MCF 10A (cell line): ENCODE measurements at regions of chr5 and their contacts with region 1.

Region 1: GRCh38 chr5:175867587-175868347 is 3.6 kb upstream of the CPLX2 start:
- DNase-seq: peak; percentile 66
- H3K4me3 Mint-ChIP-seq: no peak overlapping the region
- H3K27ac Mint-ChIP-seq: no peak overlapping the region
- H3K4me1 Mint-ChIP-seq: no peaks in the 10 kb centered on the region
- H3K27me3 Mint-ChIP-seq: peaks cover 66% of the 10 kb centered on the region
- CTCF ChIP-seq: peak; percentile 48

Region 2: GRCh38 chr5:175746851-175747250 is 120.9 kb before region 1 on chr5:
- CTCF ChIA-PET with region 1: interaction called, 4 read pairs
- POLR2A ChIA-PET with region 1: no interaction called
- intact Hi-C with region 1: loop called (anchors 5 kb)
- DNase-seq: peak; percentile 63
- H3K4me3 Mint-ChIP-seq: peak overlapping the region; percentile 51
- H3K27ac Mint-ChIP-seq: no peak overlapping the region
- H3K4me1 Mint-ChIP-seq: peaks cover 14% of the 10 kb centered on the region
- H3K27me3 Mint-ChIP-seq: peaks cover 26% of the 10 kb centered on the region
- CTCF ChIP-seq: no peak

Region 3: DNA sequence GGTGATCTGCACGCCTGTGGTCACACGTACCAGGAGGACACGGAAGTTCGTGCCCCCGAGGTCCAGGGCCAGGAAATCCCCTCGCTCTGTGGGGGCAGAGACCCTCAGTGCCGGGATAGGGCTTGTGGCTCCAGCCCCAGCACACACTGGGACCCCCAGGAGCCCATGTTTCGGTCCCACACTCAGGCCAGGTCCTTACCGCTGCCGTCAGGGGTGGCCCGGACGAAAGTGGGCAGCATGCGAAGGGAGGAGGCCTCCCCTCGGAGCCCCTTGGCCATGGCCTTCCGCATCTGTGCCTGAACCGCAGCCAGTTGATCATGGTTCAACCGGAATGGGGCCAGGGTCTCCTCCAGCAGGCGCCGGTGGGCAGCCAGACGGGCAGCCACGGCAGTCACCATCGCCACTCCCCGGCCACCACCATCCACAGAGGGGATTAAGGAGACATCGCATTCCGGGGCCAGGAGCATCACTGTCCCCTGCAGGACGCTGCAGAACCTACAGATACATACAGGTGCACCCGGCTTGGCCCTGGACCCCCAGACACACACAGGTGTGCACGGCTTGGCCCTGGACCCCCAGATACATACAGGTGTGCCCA is 1019.6 kb after region 1 on chr5:
- CTCF ChIA-PET with region 1: no interaction called
- POLR2A ChIA-PET with region 1: no interaction called
- intact Hi-C with region 1: no loop called
- DNase-seq: no peak
- H3K4me3 Mint-ChIP-seq: no peak overlapping the region
- H3K27ac Mint-ChIP-seq: no peak overlapping the region
- H3K4me1 Mint-ChIP-seq: no peaks in the 10 kb centered on the region
- H3K27me3 Mint-ChIP-seq: peaks cover 24% of the 10 kb centered on the region
- CTCF ChIP-seq: no peak